Natural killer cell (primary cell): ENCODE measurements at regions of chr18 and their contacts with region 1.

Region 1: DNA sequence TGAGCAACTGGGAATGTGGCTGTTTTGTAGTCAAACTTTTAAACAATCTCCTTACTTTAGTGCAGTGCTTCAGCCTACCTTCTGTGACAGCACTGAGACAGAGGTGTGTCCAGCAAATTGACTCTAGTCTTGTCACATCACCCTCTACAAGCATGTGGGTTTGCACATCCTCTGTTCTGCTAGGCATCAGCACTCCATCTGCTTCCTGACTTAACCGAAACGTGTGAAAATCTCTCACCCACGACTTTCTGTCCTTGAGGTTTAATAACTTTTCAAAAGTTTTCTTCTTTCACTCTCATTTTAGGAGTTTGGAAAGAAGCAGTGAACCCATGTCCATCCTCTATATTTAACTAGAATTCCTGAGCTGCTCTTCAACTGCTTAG is 42.6 kb downstream of the TTR start:
- DNase-seq: peak in 1 of 2 donors; percentile 59
- ATAC-seq: peak; percentile 92 to 98 (median 95)
- H3K4me3 ChIP-seq: no peak overlapping the region
- H3K4me3 Mint-ChIP-seq: peak overlapping the region; percentile 91
- H3K27ac ChIP-seq: peak overlapping the region; percentile 85
- H3K27ac Mint-ChIP-seq: peak overlapping the region; percentile 90 to 98
- H3K4me1 ChIP-seq: peaks cover 35% of the 10 kb centered on the region
- H3K4me1 Mint-ChIP-seq: peaks cover 42 to 46% of the 10 kb centered on the region in 2 donors
- H3K27me3 ChIP-seq: no peaks in the 10 kb centered on the region
- H3K27me3 Mint-ChIP-seq: no peaks in the 10 kb centered on the region
- CTCF ChIP-seq: no peak

Region 2: GRCh38 chr18:31685097-31686082 is 51.1 kb after region 1 on chr18:
- intact Hi-C with region 1: loop called (anchors 2 kb)
- DNase-seq: peak; percentile 71 to 77
- ATAC-seq: peak; percentile 73 to 83 (median 79)
- H3K4me3 ChIP-seq: peak overlapping the region; percentile 70
- H3K4me3 Mint-ChIP-seq: peak overlapping the region; percentile 85
- H3K27ac ChIP-seq: peak overlapping the region; percentile 96
- H3K27ac Mint-ChIP-seq: peak overlapping the region; percentile 86 to 90
- H3K4me1 ChIP-seq: peaks cover 15% of the 10 kb centered on the region
- H3K4me1 Mint-ChIP-seq: peaks cover 38 to 45% of the 10 kb centered on the region in 2 donors
- H3K27me3 ChIP-seq: no peaks in the 10 kb centered on the region
- H3K27me3 Mint-ChIP-seq: peaks cover 0 to 2% of the 10 kb centered on the region in 2 donors
- CTCF ChIP-seq: peak; percentile 37